CD8-positive, alpha-beta memory T cell (primary cell): ENCODE measurements at regions of chr14 and their contacts with region 1.

Region 1: GRCh38 chr14:95534299-95535225 is at the start of gene GLRX5:
- DNase-seq: peak; percentile 94 to 99 (median 99)
- H3K4me3 ChIP-seq: peak within 1 kb of the TSS; percentile 69
- H3K4me3 Mint-ChIP-seq: peak within 1 kb of the TSS; percentile 89 to 98 (median 92)
- H3K27ac ChIP-seq: peak within 1 kb of the TSS; percentile 84
- H3K27ac Mint-ChIP-seq: peak within 1 kb of the TSS; percentile 84 to 98 (median 96)
- H3K4me1 ChIP-seq: peaks cover 38% of the 10 kb centered on the region
- H3K4me1 Mint-ChIP-seq: peaks cover 62 to 83% (median 78%) of the 10 kb centered on the region in 3 donors
- H3K27me3 ChIP-seq: no peaks in the 10 kb centered on the region
- H3K27me3 Mint-ChIP-seq: peaks cover 0 to 4% of the 10 kb centered on the region in 2 donors
- total RNA-seq, gene GLRX5: 52.9 to 54.6 TPM

Region 2: GRCh38 chr14:95515596-95516552 is 18.7 kb before region 1 on chr14:
- CTCF ChIA-PET with region 1: interaction called, 9 read pairs
- POLR2A ChIA-PET with region 1: interaction called, 16 read pairs
- DNase-seq: peak; percentile 79 to 86 (median 81)
- H3K4me3 ChIP-seq: peak overlapping the region; percentile 64
- H3K4me3 Mint-ChIP-seq: peak overlapping the region; percentile 91 to 95 (median 93)
- H3K27ac ChIP-seq: peak overlapping the region; percentile 44
- H3K27ac Mint-ChIP-seq: peak overlapping the region; percentile 85 to 98 (median 96)
- H3K4me1 ChIP-seq: peaks cover 68% of the 10 kb centered on the region
- H3K4me1 Mint-ChIP-seq: peaks cover 66 to 83% (median 75%) of the 10 kb centered on the region in 3 donors
- H3K27me3 ChIP-seq: no peaks in the 10 kb centered on the region
- H3K27me3 Mint-ChIP-seq: no peaks in the 10 kb centered on the region